ENCODE measurements at regions of chr11 and their contacts with region 1.

Region 1: GRCh38 chr11:76207642-76208401 is 1.5 kb upstream of the WNT11 start:
- DNase-seq: peak in 1 of 2 experiments; percentile 89
- H3K4me3 ChIP-seq: peak overlapping the region; percentile 30 to 62 (median 56)
- H3K27ac ChIP-seq: no peak overlapping the region
- H3K4me1 ChIP-seq: peaks cover 7 to 41% (median 20%) of the 10 kb centered on the region in 4 experiments
- H3K27me3 ChIP-seq: peaks cover 77 to 94% (median 87%) of the 10 kb centered on the region in 4 experiments
- CTCF ChIP-seq: peak; percentile 84 to 89 (median 84)
- EP300 ChIP-seq: no peak
- POLR2A ChIP-seq: no peak
- RAD21 ChIP-seq: peak; percentile 84 to 89

Region 2: GRCh38 chr11:75896843-75897419 is 310.9 kb before region 1 on chr11:
- CTCF ChIA-PET with region 1: interaction called, 20 read pairs
- POLR2A ChIA-PET with region 1: no interaction called
- DNase-seq: no peak
- H3K4me3 ChIP-seq: no peak overlapping the region
- H3K27ac ChIP-seq: no peak overlapping the region
- H3K4me1 ChIP-seq: no peaks in the 10 kb centered on the region
- H3K27me3 ChIP-seq: no peaks in the 10 kb centered on the region
- CTCF ChIP-seq: peak in 2 of 3 experiments; percentile 42; a peak in 2 of 4 replicates
- EP300 ChIP-seq: no peak
- POLR2A ChIP-seq: no peak
- RAD21 ChIP-seq: peak; percentile 66 to 77

Region 3: GRCh38 chr11:76083563-76084451 is 124.0 kb before region 1 on chr11:
- CTCF ChIA-PET with region 1: no interaction called
- POLR2A ChIA-PET with region 1: no interaction called
- DNase-seq: no peak
- H3K4me3 ChIP-seq: no peak overlapping the region
- H3K27ac ChIP-seq: no peak overlapping the region
- H3K4me1 ChIP-seq: peaks cover 0 to 8% (median 4%) of the 10 kb centered on the region in 4 experiments; a peak in 4 of 7 replicates
- H3K27me3 ChIP-seq: no peaks in the 10 kb centered on the region
- CTCF ChIP-seq: no peak
- EP300 ChIP-seq: no peak
- POLR2A ChIP-seq: no peak
- RAD21 ChIP-seq: no peak

Region 4: GRCh38 chr11:76225122-76225611 is 17.3 kb after region 1 on chr11:
- CTCF ChIA-PET with region 1: interaction called, 45 read pairs
- POLR2A ChIA-PET with region 1: interaction called, 5 read pairs
- DNase-seq: no peak
- H3K4me3 ChIP-seq: no peak overlapping the region
- H3K27ac ChIP-seq: no peak overlapping the region
- H3K4me1 ChIP-seq: no peaks in the 10 kb centered on the region
- H3K27me3 ChIP-seq: no peaks in the 10 kb centered on the region
- CTCF ChIP-seq: no peak
- EP300 ChIP-seq: no peak
- POLR2A ChIP-seq: no peak
- RAD21 ChIP-seq: no peak

Region 5: GRCh38 chr11:76235233-76236091 is 27.6 kb after region 1 on chr11:
- CTCF ChIA-PET with region 1: interaction called, 31 read pairs
- POLR2A ChIA-PET with region 1: interaction called, 39 read pairs
- DNase-seq: peak; percentile 89 to 99
- H3K4me3 ChIP-seq: peak overlapping the region; percentile 58 to 98 (median 96)
- H3K27ac ChIP-seq: peak overlapping the region; percentile 59; the same call in 1 of the 2 replicates
- H3K4me1 ChIP-seq: peaks cover 0 to 8% (median 4%) of the 10 kb centered on the region in 4 experiments; a peak in 4 of 7 replicates
- H3K27me3 ChIP-seq: no peaks in the 10 kb centered on the region; a peak in 2 of 7 replicates
- CTCF ChIP-seq: no peak
- EP300 ChIP-seq: 0 out of 3 replicates have a peak, but pooled peaks of 1 of the 2 experiments have one; percentile 36
- POLR2A ChIP-seq: peak; percentile 91 to 93
- RAD21 ChIP-seq: no peak; a peak in 1 of 4 replicates

Region 6: GRCh38 chr11:76257074-76257719 is 49.4 kb after region 1 on chr11:
- CTCF ChIA-PET with region 1: interaction called, 83 read pairs
- POLR2A ChIA-PET with region 1: no interaction called
- DNase-seq: no peak
- H3K4me3 ChIP-seq: no peak overlapping the region
- H3K27ac ChIP-seq: no peak overlapping the region
- H3K4me1 ChIP-seq: peaks cover 0 to 8% (median 3%) of the 10 kb centered on the region in 4 experiments; a peak in 5 of 7 replicates
- H3K27me3 ChIP-seq: no peaks in the 10 kb centered on the region
- CTCF ChIP-seq: no peak
- EP300 ChIP-seq: no peak
- POLR2A ChIP-seq: no peak
- RAD21 ChIP-seq: no peak

Region 7: DNA sequence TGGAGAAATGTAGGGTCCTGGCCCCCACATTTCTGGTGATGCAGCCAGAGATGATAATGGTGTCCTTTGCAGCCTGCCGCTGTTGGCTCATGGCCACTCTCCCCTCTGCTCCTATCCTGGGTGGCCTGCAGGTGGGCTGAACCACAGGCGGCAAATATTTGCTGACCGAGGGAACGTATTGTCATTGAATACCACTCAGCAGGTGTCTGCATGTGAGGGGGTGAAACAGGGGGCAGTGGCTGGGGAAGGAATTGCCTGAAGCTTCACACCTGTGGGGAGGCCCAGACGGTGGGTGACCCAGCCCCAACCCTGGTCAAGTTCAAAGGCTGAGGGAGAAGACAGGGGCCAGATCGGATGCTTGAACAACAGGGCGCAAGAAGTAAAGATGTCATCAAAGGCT is 71.8 kb after region 1 on chr11:
- CTCF ChIA-PET with region 1: interaction called, 36 read pairs
- POLR2A ChIA-PET with region 1: no interaction called
- DNase-seq: peak in 1 of 2 experiments; percentile 19
- H3K4me3 ChIP-seq: no peak overlapping the region
- H3K27ac ChIP-seq: no peak overlapping the region
- H3K4me1 ChIP-seq: peaks cover 5 to 33% (median 13%) of the 10 kb centered on the region in 4 experiments
- H3K27me3 ChIP-seq: peaks cover 0 to 7% (median 2%) of the 10 kb centered on the region in 4 experiments; a peak in 2 of 7 replicates
- CTCF ChIP-seq: no peak
- EP300 ChIP-seq: peak; percentile 17 to 27; a peak in 2 of 3 replicates
- POLR2A ChIP-seq: no peak
- RAD21 ChIP-seq: no peak

Region 8: GRCh38 chr11:76318744-76319384 is 111.0 kb after region 1 on chr11:
- CTCF ChIA-PET with region 1: interaction called, 252 read pairs
- POLR2A ChIA-PET with region 1: interaction called, 9 read pairs
- DNase-seq: peak; percentile 68 to 94
- H3K4me3 ChIP-seq: no peak overlapping the region
- H3K27ac ChIP-seq: no peak overlapping the region
- H3K4me1 ChIP-seq: peaks cover under 1 to 11% (median 6%) of the 10 kb centered on the region in 4 experiments
- H3K27me3 ChIP-seq: peaks cover 8 to 32% (median 29%) of the 10 kb centered on the region in 4 experiments
- CTCF ChIP-seq: peak; percentile 90 to 96 (median 94)
- EP300 ChIP-seq: no peak
- POLR2A ChIP-seq: no peak
- RAD21 ChIP-seq: peak; percentile 99

Measured in H1 (cell line).